Sigmoid colon (tissue), 7 donors: ENCODE measurements at regions of chr6 and their contacts with region 1.

Region 1: GRCh38 chr6:157756708-157757429 is 66.2 kb upstream of the SNX9 start:
- DNase-seq: peak; percentile 93
- H3K4me3 ChIP-seq: peak overlapping the region in 3 of 4 donors; percentile 12 to 16 (median 13)
- H3K27ac ChIP-seq: peak overlapping the region; percentile 39 to 73 (median 63)
- H3K4me1 ChIP-seq: peaks cover 0 to 31% (median 23%) of the 10 kb centered on the region in 4 donors
- H3K27me3 ChIP-seq: no peaks in the 10 kb centered on the region
- CTCF ChIP-seq: peak; percentile 81 to 85 (median 82)
- EP300 ChIP-seq: no peak
- POLR2A ChIP-seq: no peak

Region 2: GRCh38 chr6:157873735-157874344 is 117.0 kb after region 1 on chr6:
- intact Hi-C with region 1: loop called (anchors 2 kb)
- DNase-seq: peak; percentile 88
- H3K4me3 ChIP-seq: no peak overlapping the region
- H3K27ac ChIP-seq: no peak overlapping the region
- H3K4me1 ChIP-seq: no peaks in the 10 kb centered on the region
- H3K27me3 ChIP-seq: no peaks in the 10 kb centered on the region
- CTCF ChIP-seq: peak; percentile 54 to 80 (median 72)
- EP300 ChIP-seq: no peak
- POLR2A ChIP-seq: no peak

Region 3: GRCh38 chr6:157981395-157982296 is 224.8 kb after region 1 on chr6 and contains the start of gene SYNJ2:
- intact Hi-C with region 1: no loop called
- DNase-seq: peak; percentile 91
- H3K4me3 ChIP-seq: peak within 1 kb of the TSS; percentile 72 to 99 (median 82)
- H3K27ac ChIP-seq: peak within 1 kb of the TSS; percentile 83 to 94 (median 86)
- H3K4me1 ChIP-seq: peaks cover 0 to 48% (median 32%) of the 10 kb centered on the region in 4 donors
- H3K27me3 ChIP-seq: no peaks in the 10 kb centered on the region
- CTCF ChIP-seq: peak; percentile 25 to 77 (median 66)
- EP300 ChIP-seq: no peak
- POLR2A ChIP-seq: no peak
- total RNA-seq, gene SYNJ2: 8.7 to 22.9 (median 12.3) TPM

Region 4: GRCh38 chr6:158072083-158072721 is 315.3 kb after region 1 on chr6:
- intact Hi-C with region 1: loop called (anchors 5 kb)
- DNase-seq: peak; percentile 87
- H3K4me3 ChIP-seq: no peak overlapping the region
- H3K27ac ChIP-seq: peak overlapping the region in 1 of 4 donors; percentile 26
- H3K4me1 ChIP-seq: peaks cover 0 to 7% (median 0%) of the 10 kb centered on the region in 4 donors
- H3K27me3 ChIP-seq: no peaks in the 10 kb centered on the region
- CTCF ChIP-seq: peak; percentile 76 to 81 (median 80)
- EP300 ChIP-seq: no peak
- POLR2A ChIP-seq: no peak